ENCODE measurements at regions of chr1 and their contacts with region 1.

Region 1: DNA sequence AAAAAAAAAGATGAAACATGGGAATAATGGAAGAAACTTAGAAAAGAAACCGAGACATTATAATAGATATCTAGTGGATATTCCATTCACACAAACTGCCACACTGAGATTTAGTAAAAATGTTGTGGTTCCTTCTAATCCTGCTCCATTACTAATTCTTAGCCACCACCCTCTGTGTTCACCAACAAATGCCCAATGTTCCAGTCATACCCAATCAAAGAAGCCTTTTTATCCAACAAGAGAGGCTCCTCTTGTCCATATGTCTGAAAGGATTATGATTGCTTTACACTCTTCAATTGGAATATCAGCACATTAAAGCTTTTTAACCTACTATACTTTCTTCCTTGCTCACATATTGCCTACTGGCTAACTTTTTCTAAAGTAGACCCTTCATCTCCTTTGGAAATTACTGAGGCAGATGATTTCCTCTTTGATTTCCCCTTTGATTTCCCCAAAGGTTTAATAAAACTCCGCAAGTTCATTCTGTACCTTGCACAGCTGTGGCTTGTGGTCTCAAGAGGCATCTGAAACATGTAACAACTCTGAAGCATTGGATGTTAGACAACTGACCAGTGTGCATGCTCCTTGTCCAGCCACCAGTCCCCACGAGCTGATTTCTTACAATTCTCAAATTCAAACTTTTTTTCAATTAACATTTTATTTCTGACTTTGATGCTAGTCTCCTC is 305.6 kb upstream of the LYPLAL1 start:
- DNase-seq: no peak
- H3K4me3 ChIP-seq: no peak overlapping the region
- H3K27ac ChIP-seq: no peak overlapping the region
- H3K4me1 ChIP-seq: no peaks in the 10 kb centered on the region
- H3K27me3 ChIP-seq: no peaks in the 10 kb centered on the region
- CTCF ChIP-seq: no peak
- POLR2A ChIP-seq: no peak

Region 2: DNA sequence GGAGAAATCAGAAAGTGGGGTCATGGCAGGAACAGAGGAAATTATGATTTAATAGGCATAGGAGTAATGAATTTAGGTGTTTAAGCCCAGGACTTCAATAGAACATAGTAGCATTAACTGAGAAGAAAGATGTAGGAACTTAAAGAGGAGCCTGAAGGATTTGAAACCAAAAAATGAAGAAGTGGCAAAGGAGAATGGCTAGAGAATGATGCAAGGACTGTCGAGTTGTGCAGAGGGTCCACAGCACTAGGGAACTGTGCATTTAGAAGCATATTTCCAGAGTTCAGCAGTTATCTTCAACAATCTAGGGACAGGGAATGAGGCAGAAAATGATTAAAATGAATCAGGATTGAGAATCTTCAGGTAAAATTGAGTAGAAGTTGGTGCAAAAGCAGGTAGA is 22.5 kb before region 1 on chr1:
- CTCF ChIA-PET with region 1: no interaction called
- POLR2A ChIA-PET with region 1: no interaction called
- dilution Hi-C with region 1: no loop called
- intact Hi-C with region 1: loop called (anchors 2 kb)
- DNase-seq: no peak
- H3K4me3 ChIP-seq: no peak overlapping the region
- H3K27ac ChIP-seq: no peak overlapping the region
- H3K4me1 ChIP-seq: peaks cover 3% of the 10 kb centered on the region
- H3K27me3 ChIP-seq: no peaks in the 10 kb centered on the region
- CTCF ChIP-seq: no peak
- POLR2A ChIP-seq: no peak